ENCODE measurements at regions of chr19 and their contacts with region 1.

Region 1: DNA sequence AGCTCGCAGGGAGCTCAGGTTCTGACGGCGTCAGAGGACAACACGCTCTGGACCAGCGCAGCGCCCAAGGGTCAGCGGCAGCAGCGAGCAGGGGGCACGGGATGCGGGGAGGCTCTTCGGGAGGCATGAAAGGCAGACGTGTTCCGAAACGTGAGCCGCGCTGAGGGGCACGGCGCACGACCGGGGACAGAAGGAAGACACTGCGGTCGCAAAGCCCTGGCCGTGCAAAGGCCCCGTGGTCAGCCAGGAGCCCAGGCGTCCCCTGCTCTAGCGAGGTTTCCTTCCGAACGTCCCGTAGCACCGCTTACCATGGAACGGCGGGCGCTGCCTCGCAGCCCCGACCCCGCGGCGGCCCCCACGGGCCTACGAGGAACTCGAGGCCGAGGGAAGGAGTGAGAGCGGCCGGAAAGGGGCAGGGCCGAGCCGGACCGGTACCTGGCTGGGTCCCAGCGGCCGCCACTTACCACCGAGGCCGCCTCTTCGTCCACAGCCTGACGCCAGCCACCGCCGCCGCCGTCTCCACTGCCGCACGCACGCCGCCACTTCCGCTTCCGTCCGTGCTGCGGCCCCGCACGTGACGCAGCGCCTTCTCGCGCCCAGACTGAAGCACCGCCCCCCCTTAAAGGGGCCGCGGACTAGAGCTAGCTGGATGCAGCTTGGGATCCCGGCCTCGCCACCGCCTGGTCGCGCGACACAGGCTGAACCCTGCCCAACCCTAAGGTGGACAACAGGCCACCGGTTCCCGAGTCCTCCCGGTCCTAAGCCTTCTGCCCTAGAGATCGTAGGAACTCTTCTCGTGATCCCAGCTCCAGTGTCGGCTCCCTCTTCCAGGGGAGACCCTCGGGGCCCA is 9.4 kb downstream of the ABHD17A start:
- DNase-seq: peak; percentile 89 to 94 (median 93)
- H3K4me3 ChIP-seq: peak overlapping the region; percentile 83 to 99 (median 90)
- H3K27ac ChIP-seq: peak overlapping the region; percentile 86 to 95
- H3K4me1 ChIP-seq: peaks cover 6 to 33% (median 25%) of the 10 kb centered on the region in 4 experiments
- H3K27me3 ChIP-seq: no peaks in the 10 kb centered on the region

Region 2: GRCh38 chr19:1863726-1864480 is 12.0 kb before region 1 on chr19:
- CTCF ChIA-PET with region 1: interaction called, 32 read pairs
- POLR2A ChIA-PET with region 1: interaction called, 19 read pairs
- DNase-seq: peak; percentile 91 to 96 (median 95)
- H3K4me3 ChIP-seq: peak overlapping the region; percentile 58 to 87 (median 76)
- H3K27ac ChIP-seq: peak overlapping the region; percentile 70 to 84
- H3K4me1 ChIP-seq: peaks cover 0 to 46% (median 43%) of the 10 kb centered on the region in 4 experiments
- H3K27me3 ChIP-seq: no peaks in the 10 kb centered on the region